ENCODE measurements at regions of chr10 and their contacts with region 1.

Region 1: GRCh38 chr10:103069453-103070331 is 123.4 kb downstream of the NT5C2 start:
- DNase-seq: peak; percentile 40 to 82 (median 73)
- ATAC-seq: peak; percentile 83 to 98 (median 97)
- H3K4me3 ChIP-seq: no peak overlapping the region
- H3K27ac ChIP-seq: no peak overlapping the region
- H3K4me1 ChIP-seq: no peaks in the 10 kb centered on the region
- H3K27me3 ChIP-seq: no peaks in the 10 kb centered on the region
- CTCF ChIP-seq: peak; percentile 23 to 62 (median 46)

Region 2: GRCh38 chr10:102729029-102730026 is 340.4 kb before region 1 on chr10:
- intact Hi-C with region 1: loop called in 1 of 3 experiments (anchors 10 kb)
- DNase-seq: peak; percentile 67 to 95 (median 86)
- ATAC-seq: peak; percentile 96 to 98 (median 97)
- H3K4me3 ChIP-seq: no peak overlapping the region
- H3K27ac ChIP-seq: no peak overlapping the region
- H3K4me1 ChIP-seq: no peaks in the 10 kb centered on the region
- H3K27me3 ChIP-seq: no peaks in the 10 kb centered on the region
- CTCF ChIP-seq: peak; percentile 85 to 89 (median 86)

Region 3: GRCh38 chr10:102835007-102835482 is 234.6 kb before region 1 on chr10:
- intact Hi-C with region 1: loop called in 2 of 3 experiments (anchors 2 to 10 kb)
- DNase-seq: peak; percentile 54 to 82 (median 70)
- ATAC-seq: peak; percentile 87 to 94 (median 91)
- H3K4me3 ChIP-seq: no peak overlapping the region
- H3K27ac ChIP-seq: no peak overlapping the region
- H3K4me1 ChIP-seq: peaks cover 0 to 5% (median 0%) of the 10 kb centered on the region in 3 donors
- H3K27me3 ChIP-seq: no peaks in the 10 kb centered on the region
- CTCF ChIP-seq: peak; percentile 78 to 86 (median 80)

Region 4: GRCh38 chr10:102917962-102918816 is 151.5 kb before region 1 on chr10 and contains the start of gene CNNM2:
- intact Hi-C with region 1: loop called in 2 of 3 experiments (anchors 5 to 10 kb)
- DNase-seq: peak; percentile 97 to 100 (median 100)
- ATAC-seq: peak; percentile 90 to 96 (median 92)
- H3K4me3 ChIP-seq: peak within 1 kb of the TSS; percentile 66 to 97 (median 89)
- H3K27ac ChIP-seq: peak within 1 kb of the TSS; percentile 79 to 95 (median 86)
- H3K4me1 ChIP-seq: peaks cover 3 to 13% (median 12%) of the 10 kb centered on the region in 3 donors
- H3K27me3 ChIP-seq: no peaks in the 10 kb centered on the region
- CTCF ChIP-seq: no peak
- total RNA-seq, gene CNNM2: 4.4 to 8.9 (median 6.0) TPM

Region 5: DNA sequence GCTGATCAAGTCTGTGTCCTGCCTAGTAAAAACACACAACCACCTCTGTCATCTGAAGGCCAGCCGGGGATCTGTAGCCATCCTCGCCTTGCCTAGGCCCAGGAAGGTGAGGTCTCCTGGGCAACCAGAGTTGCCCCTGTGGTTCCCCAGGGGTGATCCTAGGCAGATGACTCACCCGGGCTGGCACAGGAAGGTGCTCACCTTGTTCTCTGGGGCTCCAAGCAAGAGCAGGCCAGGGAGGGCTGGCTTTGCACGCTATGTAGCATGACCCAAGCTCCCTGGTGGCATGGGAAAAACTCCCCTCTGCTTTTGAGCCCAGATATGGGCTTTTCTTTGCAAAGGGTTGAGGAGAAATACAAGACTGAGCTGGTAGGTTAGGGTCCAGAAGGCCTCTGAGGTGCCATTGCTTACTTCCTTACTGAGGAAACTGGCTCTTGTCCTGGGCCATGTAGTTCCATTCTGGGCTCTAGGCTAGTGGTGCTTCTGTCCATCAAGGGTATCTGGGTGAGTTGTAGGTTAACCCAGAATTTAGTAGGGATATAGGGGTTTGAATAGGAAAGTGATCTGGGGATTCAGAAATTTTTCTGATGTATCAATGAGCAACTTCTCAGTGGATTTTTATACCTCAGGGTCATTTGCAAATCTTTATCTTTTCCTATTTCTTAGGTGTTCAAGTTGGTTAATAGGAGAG is 11.3 kb after region 1 on chr10:
- intact Hi-C with region 1: no loop called
- DNase-seq: no peak
- ATAC-seq: no peak
- H3K4me3 ChIP-seq: no peak overlapping the region
- H3K27ac ChIP-seq: no peak overlapping the region
- H3K4me1 ChIP-seq: no peaks in the 10 kb centered on the region
- H3K27me3 ChIP-seq: no peaks in the 10 kb centered on the region
- CTCF ChIP-seq: no peak

Region 6: DNA sequence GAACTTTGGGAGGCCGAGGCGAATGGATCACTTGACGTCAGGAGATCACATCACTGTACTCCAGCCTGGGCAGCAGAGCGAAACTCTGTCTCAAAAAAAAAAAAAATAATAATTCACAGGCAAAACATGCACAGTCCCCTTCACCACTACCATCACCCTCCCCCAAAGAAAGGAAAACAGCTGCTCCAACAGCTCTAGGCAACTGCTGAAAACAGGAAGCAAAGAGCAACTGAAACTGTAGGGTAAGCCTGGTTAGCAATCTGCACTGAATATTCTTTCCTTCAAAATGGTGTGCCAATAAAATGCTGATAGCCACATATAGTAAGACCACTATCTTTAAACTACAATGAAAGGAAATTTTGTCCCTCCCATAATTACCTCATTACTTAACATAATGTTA is 111.6 kb after region 1 on chr10:
- intact Hi-C with region 1: no loop called
- DNase-seq: no peak
- ATAC-seq: peak in 3 of 4 donors; percentile 49 to 80 (median 53)
- H3K4me3 ChIP-seq: no peak overlapping the region
- H3K27ac ChIP-seq: no peak overlapping the region
- H3K4me1 ChIP-seq: peaks cover 16 to 21% (median 19%) of the 10 kb centered on the region in 3 donors
- H3K27me3 ChIP-seq: no peaks in the 10 kb centered on the region
- CTCF ChIP-seq: no peak